MCF 10A (cell line): ENCODE measurements at regions of chr18 and their contacts with region 1.

Region 1: GRCh38 chr18:55234366-55235093 is 275.3 kb upstream of the CCDC68 start:
- DNase-seq: peak; percentile 82
- H3K4me3 Mint-ChIP-seq: peak overlapping the region; percentile 59
- H3K27ac Mint-ChIP-seq: no peak overlapping the region
- H3K4me1 Mint-ChIP-seq: peaks cover 5% of the 10 kb centered on the region
- H3K27me3 Mint-ChIP-seq: no peaks in the 10 kb centered on the region
- CTCF ChIP-seq: peak; percentile 78

Region 2: GRCh38 chr18:54873884-54874255 is 360.7 kb before region 1 on chr18:
- CTCF ChIA-PET with region 1: no interaction called
- POLR2A ChIA-PET with region 1: no interaction called
- intact Hi-C with region 1: no loop called
- DNase-seq: peak; percentile 22
- H3K4me3 Mint-ChIP-seq: no peak overlapping the region
- H3K27ac Mint-ChIP-seq: peak overlapping the region; percentile 67
- H3K4me1 Mint-ChIP-seq: peaks cover 12% of the 10 kb centered on the region
- H3K27me3 Mint-ChIP-seq: no peaks in the 10 kb centered on the region
- CTCF ChIP-seq: no peak

Region 3: GRCh38 chr18:55096261-55096951 is 138.1 kb before region 1 on chr18:
- CTCF ChIA-PET with region 1: interaction called, 7 read pairs
- POLR2A ChIA-PET with region 1: no interaction called
- intact Hi-C with region 1: loop called (anchors 5 kb)
- DNase-seq: peak; percentile 65
- H3K4me3 Mint-ChIP-seq: no peak overlapping the region
- H3K27ac Mint-ChIP-seq: no peak overlapping the region
- H3K4me1 Mint-ChIP-seq: peaks cover 11% of the 10 kb centered on the region
- H3K27me3 Mint-ChIP-seq: no peaks in the 10 kb centered on the region
- CTCF ChIP-seq: peak; percentile 29

Region 4: DNA sequence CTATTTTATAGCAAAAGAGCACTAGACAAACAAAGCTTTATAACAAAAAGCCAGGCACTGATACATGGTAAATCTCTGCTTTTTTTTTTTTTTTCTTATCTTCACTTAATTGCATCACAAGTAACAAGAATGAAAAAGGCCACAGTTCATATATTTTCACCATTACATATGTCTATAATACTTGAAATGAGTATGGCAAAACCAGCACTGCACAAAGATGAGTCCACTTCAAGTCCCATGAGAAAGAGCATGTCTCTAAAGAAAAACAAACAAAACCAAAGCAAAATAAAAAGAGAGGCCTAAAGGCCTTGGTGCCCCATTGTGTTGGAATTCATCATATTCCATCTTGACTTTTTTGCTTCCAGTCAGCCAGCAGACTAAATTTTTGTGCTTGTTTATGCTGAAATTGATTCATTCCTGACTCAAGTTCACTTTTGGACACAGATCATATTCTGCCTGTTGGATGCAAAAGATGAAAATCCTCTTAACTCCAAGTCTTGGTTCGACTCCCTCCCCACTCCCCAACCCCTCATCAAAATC is 10.4 kb before region 1 on chr18:
- CTCF ChIA-PET with region 1: interaction called, 19 read pairs
- POLR2A ChIA-PET with region 1: no interaction called
- intact Hi-C with region 1: no loop called
- DNase-seq: no peak
- H3K4me3 Mint-ChIP-seq: no peak overlapping the region
- H3K27ac Mint-ChIP-seq: no peak overlapping the region
- H3K4me1 Mint-ChIP-seq: no peaks in the 10 kb centered on the region
- H3K27me3 Mint-ChIP-seq: no peaks in the 10 kb centered on the region
- CTCF ChIP-seq: no peak

Region 5: DNA sequence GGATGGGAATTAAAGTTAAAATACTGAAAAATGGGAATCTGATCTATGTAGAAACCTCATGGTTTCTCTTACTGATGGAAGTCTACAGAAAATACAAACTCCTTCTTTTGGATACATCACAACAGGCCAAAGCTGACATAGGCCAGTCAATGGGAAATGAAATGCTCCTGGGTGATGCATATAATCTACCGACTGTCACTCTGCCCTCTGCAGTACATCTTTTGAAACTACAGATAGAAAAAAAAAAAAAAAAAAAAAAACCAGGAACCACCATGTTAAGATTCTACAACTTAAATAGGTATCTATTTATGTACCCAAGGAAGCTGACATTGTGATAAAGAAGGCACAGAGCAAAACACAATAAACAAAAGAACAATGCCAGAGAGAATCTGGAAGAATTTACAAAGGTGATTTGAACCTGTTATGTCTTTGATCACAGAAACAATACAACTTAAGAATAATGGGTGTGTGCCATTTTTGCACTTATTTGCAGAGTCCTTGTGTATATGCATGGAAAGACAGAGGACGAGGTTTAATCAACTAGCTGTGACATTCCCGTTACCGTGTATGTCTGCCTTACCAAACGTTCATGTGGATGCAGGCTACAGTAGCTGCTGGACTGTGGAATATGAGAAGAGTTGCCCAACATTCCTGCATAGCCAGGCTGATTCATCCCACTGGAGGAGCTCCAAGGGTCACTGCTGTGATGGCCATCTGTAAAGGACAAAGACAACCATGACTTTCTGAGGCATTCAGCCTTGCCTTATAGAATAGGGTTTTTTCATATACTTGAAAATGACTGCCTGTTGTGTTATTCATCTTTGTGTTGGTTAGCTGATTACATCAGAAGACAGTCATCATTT is 40.7 kb after region 1 on chr18:
- CTCF ChIA-PET with region 1: interaction called, 12 read pairs
- POLR2A ChIA-PET with region 1: no interaction called
- intact Hi-C with region 1: loop called (anchors 1 kb)
- DNase-seq: peak; percentile 86
- H3K4me3 Mint-ChIP-seq: no peak overlapping the region
- H3K27ac Mint-ChIP-seq: no peak overlapping the region
- H3K4me1 Mint-ChIP-seq: no peaks in the 10 kb centered on the region
- H3K27me3 Mint-ChIP-seq: no peaks in the 10 kb centered on the region
- CTCF ChIP-seq: peak; percentile 21

Region 6: GRCh38 chr18:55322178-55322735 is 87.7 kb after region 1 on chr18:
- CTCF ChIA-PET with region 1: interaction called, 13 read pairs
- POLR2A ChIA-PET with region 1: no interaction called
- intact Hi-C with region 1: loop called (anchors 10 kb)
- DNase-seq: peak; percentile 75
- H3K4me3 Mint-ChIP-seq: peak overlapping the region; percentile 83
- H3K27ac Mint-ChIP-seq: peak overlapping the region; percentile 47
- H3K4me1 Mint-ChIP-seq: peaks cover 5% of the 10 kb centered on the region
- H3K27me3 Mint-ChIP-seq: no peaks in the 10 kb centered on the region
- CTCF ChIP-seq: no peak

Region 7: GRCh38 chr18:55415258-55415871 is 180.8 kb after region 1 on chr18:
- CTCF ChIA-PET with region 1: interaction called, 9 read pairs
- POLR2A ChIA-PET with region 1: no interaction called
- intact Hi-C with region 1: loop called (anchors 5 kb)
- DNase-seq: peak; percentile 80
- H3K4me3 Mint-ChIP-seq: no peak overlapping the region
- H3K27ac Mint-ChIP-seq: no peak overlapping the region
- H3K4me1 Mint-ChIP-seq: peaks cover 5% of the 10 kb centered on the region
- H3K27me3 Mint-ChIP-seq: no peaks in the 10 kb centered on the region
- CTCF ChIP-seq: peak; percentile 91

Region 8: GRCh38 chr18:55861266-55861665 is 626.7 kb after region 1 on chr18:
- CTCF ChIA-PET with region 1: interaction called, 4 read pairs
- POLR2A ChIA-PET with region 1: interaction called, 3 read pairs
- intact Hi-C with region 1: loop called (anchors 1 kb)
- DNase-seq: peak; percentile 55
- H3K4me3 Mint-ChIP-seq: no peak overlapping the region
- H3K27ac Mint-ChIP-seq: no peak overlapping the region
- H3K4me1 Mint-ChIP-seq: peaks cover 23% of the 10 kb centered on the region
- H3K27me3 Mint-ChIP-seq: no peaks in the 10 kb centered on the region
- CTCF ChIP-seq: peak; percentile 37